ENCODE measurements at regions of chr1 and their contacts with region 1.

Region 1: DNA sequence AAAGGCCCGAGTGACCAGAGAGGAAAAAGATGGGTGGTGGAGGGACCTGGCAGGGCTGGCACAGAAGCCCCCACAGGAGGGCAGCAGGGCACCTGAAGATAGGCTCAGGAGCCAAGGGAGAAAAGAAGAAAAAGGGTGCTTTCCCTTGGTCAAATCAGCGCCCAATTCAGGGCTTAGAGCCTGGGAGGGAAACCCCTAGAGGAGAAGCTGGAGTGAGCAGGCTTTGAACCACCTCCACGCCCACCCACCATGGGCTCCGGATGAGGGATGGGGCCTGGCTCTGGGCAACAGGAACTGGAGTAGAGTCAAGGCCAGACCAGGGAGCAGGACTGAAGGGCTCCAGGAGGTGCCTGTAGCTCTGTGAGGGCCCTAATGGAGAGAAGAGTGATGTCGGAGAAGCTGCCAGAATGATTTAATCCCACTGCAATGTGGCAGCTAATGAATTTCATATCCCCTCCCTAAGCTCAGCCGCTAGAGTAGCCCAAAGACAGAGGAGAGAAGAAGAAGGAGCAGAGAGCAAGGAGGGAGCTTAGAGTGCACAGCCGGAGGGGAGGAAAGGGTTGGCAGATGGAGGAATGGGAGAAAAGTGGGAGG is 12.0 kb upstream of the PRELP start:
- DNase-seq: no peak
- H3K4me3 ChIP-seq: no peak overlapping the region
- H3K27ac ChIP-seq: peak overlapping the region; percentile 89 to 95 (median 94)
- H3K4me1 ChIP-seq: peaks cover 0 to 68% (median 60%) of the 10 kb centered on the region in 4 donors
- H3K27me3 ChIP-seq: no peaks in the 10 kb centered on the region
- CTCF ChIP-seq: peak in 3 of 4 experiments; percentile 14 to 44 (median 40)
- EP300 ChIP-seq: no peak
- POLR2A ChIP-seq: no peak

Region 2: DNA sequence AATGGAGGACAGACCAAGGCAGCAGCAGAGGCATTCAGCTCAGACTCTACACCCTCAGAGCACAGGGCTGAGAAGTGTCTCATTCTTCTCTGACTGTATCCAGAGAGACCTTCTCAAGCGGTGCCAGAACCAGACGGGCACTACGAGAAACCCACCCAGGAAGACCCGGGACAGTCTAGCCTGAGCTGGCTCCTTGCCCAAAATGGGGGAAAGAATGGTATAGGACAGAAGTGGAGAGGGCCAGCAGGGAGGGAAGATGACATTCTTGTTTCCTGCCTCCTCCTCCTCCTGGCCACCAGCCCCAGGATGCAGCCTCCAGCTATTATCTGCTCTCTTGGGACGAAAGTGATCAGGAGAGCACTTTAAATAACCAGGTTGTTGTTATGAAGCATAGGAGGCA is 10.6 kb before region 1 on chr1:
- intact Hi-C with region 1: loop called (anchors 1 kb)
- DNase-seq: no peak
- H3K4me3 ChIP-seq: no peak overlapping the region
- H3K27ac ChIP-seq: peak overlapping the region in 2 of 4 donors; percentile 63 to 67
- H3K4me1 ChIP-seq: peaks cover 0 to 37% (median 32%) of the 10 kb centered on the region in 4 donors
- H3K27me3 ChIP-seq: no peaks in the 10 kb centered on the region
- CTCF ChIP-seq: no peak
- EP300 ChIP-seq: no peak
- POLR2A ChIP-seq: no peak

Region 3: GRCh38 chr1:203572134-203572625 is 108.6 kb after region 1 on chr1:
- intact Hi-C with region 1: no loop called
- DNase-seq: no peak
- H3K4me3 ChIP-seq: no peak overlapping the region
- H3K27ac ChIP-seq: peak overlapping the region in 1 of 4 donors; percentile 49
- H3K4me1 ChIP-seq: peaks cover 0 to 6% (median 3%) of the 10 kb centered on the region in 4 donors
- H3K27me3 ChIP-seq: no peaks in the 10 kb centered on the region
- CTCF ChIP-seq: no peak
- EP300 ChIP-seq: no peak
- POLR2A ChIP-seq: no peak